ENCODE measurements at regions of chr6 and their contacts with region 1.

Region 1: GRCh38 chr6:31739639-31740396 is at the start of gene MSH5:
- DNase-seq: peak; percentile 98
- ATAC-seq: peak; percentile 87
- H3K4me3 Mint-ChIP-seq: peak within 1 kb of the TSS; percentile 96
- H3K27ac Mint-ChIP-seq: peak within 1 kb of the TSS; percentile 86
- H3K4me1 Mint-ChIP-seq: peaks cover 46% of the 10 kb centered on the region
- H3K27me3 Mint-ChIP-seq: no peaks in the 10 kb centered on the region
- total RNA-seq, gene MSH5: 92.1 to 126 TPM

Region 2: GRCh38 chr6:31575335-31575901 is 164.4 kb before region 1 on chr6 and contains the start of gene TNF:
- CTCF ChIA-PET with region 1: interaction called, 8 read pairs
- POLR2A ChIA-PET with region 1: no interaction called
- intact Hi-C with region 1: loop called in 1 of 2 experiments (anchors 1 kb)
- DNase-seq: peak; percentile 89
- ATAC-seq: peak; percentile 23
- H3K4me3 Mint-ChIP-seq: peak within 1 kb of the TSS; percentile 97
- H3K27ac Mint-ChIP-seq: peak within 1 kb of the TSS; percentile 98
- H3K4me1 Mint-ChIP-seq: peaks cover 73% of the 10 kb centered on the region
- H3K27me3 Mint-ChIP-seq: no peaks in the 10 kb centered on the region
- total RNA-seq, gene TNF: 82.3 to 93.3 TPM

Region 3: DNA sequence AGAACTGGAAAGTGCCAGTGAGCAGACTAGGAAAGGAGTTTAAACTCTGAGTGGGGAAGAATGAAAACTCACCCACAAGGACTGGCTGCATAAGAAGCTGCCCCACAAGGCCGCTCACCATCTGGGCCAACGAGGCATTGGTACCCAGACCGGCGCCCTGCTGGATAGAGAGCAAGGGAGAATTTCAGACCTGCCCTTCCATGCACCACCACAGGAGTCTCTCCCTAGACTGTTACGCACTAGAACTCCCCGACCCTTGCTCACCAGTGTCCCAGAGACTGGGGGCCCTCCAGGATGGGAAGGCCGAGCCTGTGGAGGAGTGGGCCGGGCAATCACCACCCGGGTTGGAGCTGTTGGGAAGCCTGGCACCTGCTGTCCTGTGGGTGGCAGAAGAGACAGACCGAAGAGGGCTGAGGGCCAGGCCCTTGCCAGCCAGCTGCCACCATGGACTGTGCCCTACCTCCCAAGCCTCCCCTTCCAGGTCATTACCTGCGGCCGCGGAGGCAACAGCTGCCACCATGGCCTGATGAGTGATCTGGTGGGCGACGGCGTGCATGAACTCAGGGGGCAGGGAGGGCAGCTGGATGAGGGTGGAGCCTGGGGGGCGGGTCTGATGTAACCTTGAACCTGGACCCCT is 95.9 kb before region 1 on chr6:
- CTCF ChIA-PET with region 1: no interaction called
- POLR2A ChIA-PET with region 1: no interaction called
- intact Hi-C with region 1: no loop called
- DNase-seq: no peak
- ATAC-seq: no peak
- H3K4me3 Mint-ChIP-seq: no peak overlapping the region
- H3K27ac Mint-ChIP-seq: no peak overlapping the region
- H3K4me1 Mint-ChIP-seq: peaks cover 7% of the 10 kb centered on the region
- H3K27me3 Mint-ChIP-seq: no peaks in the 10 kb centered on the region

Region 4: DNA sequence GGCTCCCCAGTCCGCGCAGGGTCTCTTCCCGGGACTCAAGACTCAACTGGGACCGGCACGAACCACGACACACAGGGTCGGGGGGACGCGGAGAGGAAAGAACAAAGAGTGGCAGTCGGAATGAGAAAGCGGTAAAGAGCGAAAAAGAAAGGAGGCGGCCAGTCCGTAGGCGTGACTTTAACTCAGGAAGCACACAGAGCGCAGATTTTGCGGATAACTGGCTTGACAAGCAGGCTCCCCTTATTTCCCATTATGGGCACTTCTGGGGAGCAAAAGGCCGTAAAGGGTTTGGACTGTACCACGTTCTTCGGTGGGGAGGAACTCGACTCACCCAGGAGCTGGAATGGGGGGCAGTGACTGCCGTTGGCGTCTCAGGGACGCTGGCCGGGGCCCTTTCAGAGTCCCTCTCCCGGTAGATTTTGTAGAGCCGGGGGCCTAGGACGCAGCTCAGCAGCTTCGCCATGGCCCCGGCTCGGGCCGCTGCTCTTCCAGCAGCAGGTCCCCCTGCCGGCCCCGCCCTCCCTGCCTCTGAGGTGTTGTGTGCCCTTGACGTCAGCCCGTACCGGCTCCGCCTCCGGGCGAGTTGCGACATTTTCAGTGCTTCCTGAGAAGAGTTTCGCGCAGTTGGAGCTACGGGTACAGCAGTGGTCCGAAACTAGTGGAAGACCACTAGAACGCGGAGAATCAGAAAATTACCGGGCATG is 36.8 kb before region 1 on chr6 and contains the start of gene ABHD16A:
- CTCF ChIA-PET with region 1: interaction called, 4 read pairs
- POLR2A ChIA-PET with region 1: interaction called, 6 read pairs
- intact Hi-C with region 1: loop called (anchors 1 to 2 kb)
- DNase-seq: peak; percentile 99
- ATAC-seq: peak; percentile 91
- H3K4me3 Mint-ChIP-seq: peak within 1 kb of the TSS; percentile 99
- H3K27ac Mint-ChIP-seq: peak within 1 kb of the TSS; percentile 97
- H3K4me1 Mint-ChIP-seq: peaks cover 24% of the 10 kb centered on the region
- H3K27me3 Mint-ChIP-seq: no peaks in the 10 kb centered on the region
- total RNA-seq, gene ABHD16A: 20.9 to 25.1 TPM

Region 5: GRCh38 chr6:31806465-31807272 is 66.9 kb after region 1 on chr6 and contains the start of gene LSM2:
- CTCF ChIA-PET with region 1: interaction called, 4 read pairs
- POLR2A ChIA-PET with region 1: no interaction called
- intact Hi-C with region 1: loop called in 1 of 2 experiments (anchors 1 kb)
- DNase-seq: peak; percentile 99
- ATAC-seq: peak; percentile 99
- H3K4me3 Mint-ChIP-seq: peak within 1 kb of the TSS; percentile 91
- H3K27ac Mint-ChIP-seq: peak within 1 kb of the TSS; percentile 94
- H3K4me1 Mint-ChIP-seq: peaks cover 22% of the 10 kb centered on the region
- H3K27me3 Mint-ChIP-seq: no peaks in the 10 kb centered on the region
- total RNA-seq, gene LSM2: 112 to 124 TPM

Region 6: DNA sequence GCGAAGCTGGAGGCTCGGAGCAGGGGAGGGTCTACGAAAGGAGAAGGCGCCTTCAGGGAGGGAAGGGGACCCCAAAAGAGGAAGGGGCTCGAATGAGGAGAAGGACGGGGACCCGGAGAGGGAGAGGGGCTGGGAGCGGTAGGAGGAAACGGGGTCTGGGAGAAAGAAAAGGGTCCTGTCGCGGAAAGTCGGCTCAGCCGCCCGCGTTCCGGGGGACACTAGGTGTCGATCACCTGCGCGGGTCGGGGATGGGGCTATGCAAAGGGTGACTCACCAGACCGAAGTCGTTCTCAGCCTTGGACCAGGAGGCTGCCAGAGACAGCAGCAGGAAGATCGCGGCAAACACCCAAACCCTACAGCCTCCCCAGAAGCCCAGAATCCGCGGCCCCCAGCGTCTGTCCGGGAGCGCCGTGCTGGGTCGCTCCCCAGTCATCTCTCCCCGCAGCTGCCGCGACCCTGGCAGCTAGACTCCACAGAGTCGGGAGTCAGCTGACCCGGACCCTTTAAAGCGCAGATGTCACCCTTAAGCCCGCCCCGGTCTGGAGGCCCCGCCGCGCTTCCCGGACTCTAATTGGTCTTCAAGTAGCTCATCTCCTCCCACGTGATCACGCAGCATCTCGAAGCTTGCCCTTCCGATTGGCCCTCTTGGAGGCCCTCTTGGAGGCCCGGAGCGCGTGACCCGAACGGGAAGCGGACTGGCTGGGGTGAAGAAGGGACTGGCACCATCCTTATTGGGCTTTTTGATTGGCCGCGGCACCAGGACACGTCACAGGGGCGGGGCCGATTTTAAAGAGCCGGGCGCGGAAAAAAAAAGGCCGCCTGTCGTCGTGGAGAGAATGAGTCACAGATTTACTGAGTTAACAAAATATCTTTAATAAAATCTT is 122.8 kb after region 1 on chr6 and contains the start of gene NEU1:
- CTCF ChIA-PET with region 1: interaction called, 6 read pairs
- POLR2A ChIA-PET with region 1: interaction called, 5 read pairs
- intact Hi-C with region 1: loop called in 1 of 2 experiments (anchors 2 kb)
- DNase-seq: peak; percentile 100
- ATAC-seq: peak; percentile 98
- H3K4me3 Mint-ChIP-seq: peak within 1 kb of the TSS; percentile 90
- H3K27ac Mint-ChIP-seq: peak within 1 kb of the TSS; percentile 91
- H3K4me1 Mint-ChIP-seq: peaks cover 27% of the 10 kb centered on the region
- H3K27me3 Mint-ChIP-seq: no peaks in the 10 kb centered on the region
- total RNA-seq, gene NEU1: 11.6 to 11.8 TPM

Region 7: GRCh38 chr6:32195652-32195901 is 455.8 kb after region 1 on chr6:
- CTCF ChIA-PET with region 1: no interaction called
- POLR2A ChIA-PET with region 1: no interaction called
- intact Hi-C with region 1: loop called in 1 of 2 experiments (anchors 5 kb)
- DNase-seq: peak; percentile 100
- ATAC-seq: peak; percentile 90
- H3K4me3 Mint-ChIP-seq: peak overlapping the region; percentile 94
- H3K27ac Mint-ChIP-seq: peak overlapping the region; percentile 90
- H3K4me1 Mint-ChIP-seq: peaks cover 32% of the 10 kb centered on the region
- H3K27me3 Mint-ChIP-seq: no peaks in the 10 kb centered on the region

Region 8: GRCh38 chr6:32838114-32838958 is 1098.5 kb after region 1 on chr6 and contains the start of gene TAP2:
- CTCF ChIA-PET with region 1: no interaction called
- POLR2A ChIA-PET with region 1: no interaction called
- intact Hi-C with region 1: no loop called
- DNase-seq: peak; percentile 99
- ATAC-seq: peak; percentile 82
- H3K4me3 Mint-ChIP-seq: peak within 1 kb of the TSS; percentile 95
- H3K27ac Mint-ChIP-seq: peak within 1 kb of the TSS; percentile 94
- H3K4me1 Mint-ChIP-seq: peaks cover 79% of the 10 kb centered on the region
- H3K27me3 Mint-ChIP-seq: no peaks in the 10 kb centered on the region
- total RNA-seq, gene TAP2: 96.4 to 150 TPM

Measured in activated CD4-positive, alpha-beta T cell treated with anti-CD3 and anti-CD28 coated beads for 36 hours (primary cell).